K562 (cell line): ENCODE measurements at regions of chr1 and their contacts with region 1.

Region 1: GRCh38 chr1:212035123-212035834 is at the starts of genes DTL and INTS7:
- DNase-seq: peak; percentile 98 to 100 (median 100)
- ATAC-seq: peak; percentile 86
- H3K4me3 ChIP-seq: peak within 1 kb of the TSS; percentile 74
- H3K27ac ChIP-seq: peak within 1 kb of the TSS; percentile 96
- H3K4me1 ChIP-seq: peaks cover 4 to 34% of the 10 kb centered on the region in 2 experiments; a peak in 4 of 5 replicates
- H3K27me3 ChIP-seq: no peaks in the 10 kb centered on the region
- CTCF ChIP-seq: peak; percentile 64 to 100 (median 80); a peak in 5 of 6 replicates
- EP300 ChIP-seq: no peak
- POLR2A ChIP-seq: peak; percentile 99
- RAD21 ChIP-seq: no peak; a peak in 1 of 4 replicates
- polyA plus RNA-seq, gene DTL: 38.3 to 66.7 TPM
- polyA plus RNA-seq, gene INTS7: 36.5 to 57.0 TPM

Region 2: GRCh38 chr1:211675230-211676105 is 359.8 kb before region 1 on chr1 and contains the start of gene NEK2:
- CTCF ChIA-PET with region 1: interaction called, 22 read pairs
- POLR2A ChIA-PET with region 1: interaction called, 18 read pairs
- in situ Hi-C with region 1: loop called (anchors 25 kb)
- intact Hi-C with region 1: loop called (anchors 1 kb)
- DNase-seq: peak; percentile 95 to 99 (median 95)
- ATAC-seq: peak; percentile 97
- H3K4me3 ChIP-seq: peak within 1 kb of the TSS; percentile 75
- H3K27ac ChIP-seq: peak within 1 kb of the TSS; percentile 88
- H3K4me1 ChIP-seq: peaks cover 10 to 16% of the 10 kb centered on the region in 2 experiments; a peak in 4 of 5 replicates
- H3K27me3 ChIP-seq: no peaks in the 10 kb centered on the region
- CTCF ChIP-seq: no peak
- EP300 ChIP-seq: peak; percentile 19; the same call in 1 of the 2 replicates
- POLR2A ChIP-seq: peak; percentile 90
- RAD21 ChIP-seq: 0 out of 4 replicates have a peak, but pooled peaks have one; percentile 9 to 17
- polyA plus RNA-seq, gene NEK2: 30.0 to 38.6 TPM

Region 3: DNA sequence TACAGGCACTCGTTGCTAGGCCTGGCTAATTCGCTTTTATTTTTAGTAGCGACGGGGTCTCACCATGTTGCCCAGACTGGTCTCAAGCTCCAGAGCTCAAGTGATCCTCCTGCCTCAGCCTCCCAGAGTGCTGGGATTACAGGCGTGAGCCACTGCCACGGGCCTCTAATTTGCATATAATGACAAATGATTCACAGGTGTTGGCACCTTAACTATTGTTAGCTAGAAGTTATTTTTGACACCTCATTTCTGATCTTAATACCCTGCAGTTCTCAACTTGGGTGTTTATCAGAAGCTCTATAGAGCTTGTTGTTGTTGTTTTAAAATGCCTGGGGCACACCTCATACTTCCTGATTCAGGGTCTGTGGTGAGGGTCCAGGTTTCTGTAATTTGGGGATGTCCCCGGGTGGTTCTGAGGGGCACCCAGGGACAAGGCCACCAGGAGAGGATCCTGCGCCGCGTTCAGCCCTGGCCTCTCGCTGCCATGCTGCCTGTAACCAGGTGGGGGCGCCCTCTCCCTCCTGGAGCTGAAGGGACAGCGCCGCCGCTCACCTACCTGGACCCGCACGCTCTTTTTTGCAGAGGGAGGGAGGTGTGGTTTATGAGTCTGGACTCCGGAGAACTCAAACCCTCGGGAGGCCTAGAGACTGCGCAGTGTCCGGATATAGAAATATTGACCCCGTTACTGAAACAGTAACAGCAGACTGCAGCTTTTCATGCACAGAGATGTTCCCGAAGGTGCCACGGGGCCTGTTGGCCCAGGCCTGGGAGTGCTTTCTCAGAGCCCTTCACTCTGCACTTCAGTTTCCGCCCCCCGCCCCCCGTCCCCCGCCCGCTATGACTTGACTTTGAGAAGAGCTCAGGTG is 336.9 kb before region 1 on chr1:
- CTCF ChIA-PET with region 1: interaction called, 11 read pairs
- POLR2A ChIA-PET with region 1: interaction called, 15 read pairs
- in situ Hi-C with region 1: loop called (anchors 25 kb)
- intact Hi-C with region 1: loop called (anchors 1 kb)
- DNase-seq: peak; percentile 90 to 94 (median 92)
- ATAC-seq: peak; percentile 97
- H3K4me3 ChIP-seq: no peak overlapping the region
- H3K27ac ChIP-seq: no peak overlapping the region
- H3K4me1 ChIP-seq: peaks cover 12 to 13% of the 10 kb centered on the region in 2 experiments; a peak in 4 of 5 replicates
- H3K27me3 ChIP-seq: peaks cover 0 to 7% of the 10 kb centered on the region in 2 experiments; a peak in 1 of 5 replicates
- CTCF ChIP-seq: peak; percentile 99 to 100 (median 100)
- EP300 ChIP-seq: peak; percentile 31; the same call in 1 of the 2 replicates
- POLR2A ChIP-seq: no peak
- RAD21 ChIP-seq: peak; percentile 99

Region 4: DNA sequence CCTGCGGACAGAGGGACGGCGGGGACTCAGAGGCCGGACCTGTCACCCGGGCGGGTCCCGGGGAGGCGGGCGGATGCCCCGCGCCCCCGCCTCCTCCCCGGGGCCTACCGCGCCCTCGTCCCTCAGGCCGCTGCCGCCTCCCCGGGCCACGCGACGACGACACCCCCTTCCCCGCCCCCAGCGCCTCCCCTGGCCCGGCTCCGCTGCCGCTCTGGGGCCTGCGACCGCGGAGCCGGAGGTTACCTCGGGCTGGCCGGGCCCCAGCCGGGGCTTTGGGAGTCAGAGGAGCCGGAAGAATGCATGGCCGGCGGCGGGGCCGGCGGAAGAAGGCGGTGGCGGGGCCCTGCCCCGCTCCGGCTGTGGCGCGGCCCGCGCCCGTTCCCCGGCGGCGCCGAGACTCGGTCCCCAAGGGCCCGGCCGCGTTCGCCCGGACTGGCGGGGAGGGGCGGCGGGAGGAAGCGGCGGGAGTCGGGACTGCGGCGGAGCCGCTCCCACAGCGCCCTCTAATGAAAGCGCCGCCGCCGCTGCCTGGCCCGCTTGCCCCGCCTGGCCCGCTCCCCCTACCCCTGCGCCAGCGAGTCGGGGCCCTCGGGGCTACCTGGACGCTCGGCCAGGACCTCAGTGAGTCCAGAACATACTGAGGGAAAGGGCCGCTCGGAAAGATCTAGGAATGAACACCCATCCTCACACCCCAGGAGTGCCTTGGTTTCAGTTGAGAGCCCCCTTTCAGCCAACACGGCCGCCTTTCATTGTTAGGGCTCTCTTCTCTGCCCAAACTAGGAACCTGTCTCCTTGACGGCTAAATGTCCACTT is 204.7 kb before region 1 on chr1 and contains the start of gene LPGAT1:
- CTCF ChIA-PET with region 1: no interaction called
- POLR2A ChIA-PET with region 1: interaction called, 7 read pairs
- in situ Hi-C with region 1: no loop called
- intact Hi-C with region 1: loop called (anchors 2 kb)
- DNase-seq: peak; percentile 85 to 91 (median 91)
- ATAC-seq: peak; percentile 96
- H3K4me3 ChIP-seq: peak within 1 kb of the TSS; percentile 83
- H3K27ac ChIP-seq: peak within 1 kb of the TSS; percentile 76
- H3K4me1 ChIP-seq: peaks cover 18 to 20% of the 10 kb centered on the region in 2 experiments
- H3K27me3 ChIP-seq: no peaks in the 10 kb centered on the region
- CTCF ChIP-seq: peak; percentile 64 to 92 (median 80)
- EP300 ChIP-seq: no peak
- POLR2A ChIP-seq: no peak
- RAD21 ChIP-seq: peak; percentile 80 to 87
- polyA plus RNA-seq, gene LPGAT1: 5.7 to 6.7 TPM

Region 5: DNA sequence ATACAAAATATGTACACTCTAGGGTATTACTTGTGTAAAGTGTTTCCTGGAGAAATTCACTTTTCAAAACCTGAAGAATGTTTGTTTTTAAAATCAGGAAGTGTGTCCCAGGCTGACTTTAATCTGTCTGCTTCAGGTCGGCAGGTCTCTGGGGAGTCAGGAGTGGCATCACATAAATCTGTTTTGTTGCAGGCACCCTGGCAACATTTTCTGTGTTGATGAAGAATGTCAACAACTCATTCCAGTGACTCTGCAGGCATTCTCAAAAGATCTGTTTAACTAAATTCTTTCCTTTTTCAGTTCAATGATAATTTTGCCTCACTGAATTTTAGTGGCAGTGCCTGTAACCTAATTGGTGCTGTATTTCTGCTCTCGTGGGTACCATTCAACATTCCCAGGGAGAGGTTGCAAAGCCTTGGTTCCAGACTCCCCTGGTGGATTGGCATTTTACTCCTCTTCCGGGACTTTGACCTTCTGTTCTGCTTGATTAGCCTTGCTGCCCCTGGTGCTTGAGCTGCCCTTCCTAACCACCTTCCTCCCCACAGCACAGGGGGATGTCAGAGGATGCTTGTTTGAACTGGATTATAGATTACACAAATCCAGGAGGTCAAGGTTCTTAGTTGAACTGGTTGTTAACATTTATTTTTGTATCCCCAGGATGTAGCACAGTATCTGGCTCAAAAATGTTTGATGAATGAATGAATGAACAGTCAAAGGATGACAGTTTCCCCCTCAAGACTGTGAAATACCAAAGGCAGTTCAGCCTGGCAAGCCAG is 149.3 kb before region 1 on chr1:
- CTCF ChIA-PET with region 1: no interaction called
- POLR2A ChIA-PET with region 1: no interaction called
- in situ Hi-C with region 1: no loop called
- intact Hi-C with region 1: no loop called
- DNase-seq: no peak
- ATAC-seq: no peak
- H3K4me3 ChIP-seq: no peak overlapping the region
- H3K27ac ChIP-seq: no peak overlapping the region
- H3K4me1 ChIP-seq: peaks cover 0 to 6% of the 10 kb centered on the region in 2 experiments; a peak in 1 of 5 replicates
- H3K27me3 ChIP-seq: peaks cover 18 to 31% of the 10 kb centered on the region in 2 experiments
- CTCF ChIP-seq: no peak
- EP300 ChIP-seq: no peak
- POLR2A ChIP-seq: no peak
- RAD21 ChIP-seq: no peak

Region 6: GRCh38 chr1:212021563-212021962 is 13.7 kb before region 1 on chr1:
- CTCF ChIA-PET with region 1: no interaction called
- POLR2A ChIA-PET with region 1: interaction called, 14 read pairs
- in situ Hi-C with region 1: no loop called
- intact Hi-C with region 1: no loop called
- DNase-seq: no peak
- ATAC-seq: peak; percentile 51
- H3K4me3 ChIP-seq: no peak overlapping the region
- H3K27ac ChIP-seq: no peak overlapping the region
- H3K4me1 ChIP-seq: no peaks in the 10 kb centered on the region
- H3K27me3 ChIP-seq: no peaks in the 10 kb centered on the region
- CTCF ChIP-seq: no peak
- EP300 ChIP-seq: no peak
- POLR2A ChIP-seq: no peak
- RAD21 ChIP-seq: no peak

Region 7: GRCh38 chr1:212291505-212292134 is 256.3 kb after region 1 on chr1:
- CTCF ChIA-PET with region 1: no interaction called
- POLR2A ChIA-PET with region 1: interaction called, 4 read pairs
- in situ Hi-C with region 1: no loop called
- intact Hi-C with region 1: loop called (anchors 1 kb)
- DNase-seq: peak; percentile 37 to 70 (median 51)
- ATAC-seq: peak; percentile 74
- H3K4me3 ChIP-seq: no peak overlapping the region
- H3K27ac ChIP-seq: no peak overlapping the region
- H3K4me1 ChIP-seq: peaks cover 6 to 50% of the 10 kb centered on the region in 2 experiments
- H3K27me3 ChIP-seq: no peaks in the 10 kb centered on the region
- CTCF ChIP-seq: peak; percentile 71 to 95 (median 78); a peak in 5 of 6 replicates
- EP300 ChIP-seq: no peak
- POLR2A ChIP-seq: no peak
- RAD21 ChIP-seq: peak; percentile 96 to 98